ENCODE measurements at regions of chr13 and their contacts with region 1.

Region 1: DNA sequence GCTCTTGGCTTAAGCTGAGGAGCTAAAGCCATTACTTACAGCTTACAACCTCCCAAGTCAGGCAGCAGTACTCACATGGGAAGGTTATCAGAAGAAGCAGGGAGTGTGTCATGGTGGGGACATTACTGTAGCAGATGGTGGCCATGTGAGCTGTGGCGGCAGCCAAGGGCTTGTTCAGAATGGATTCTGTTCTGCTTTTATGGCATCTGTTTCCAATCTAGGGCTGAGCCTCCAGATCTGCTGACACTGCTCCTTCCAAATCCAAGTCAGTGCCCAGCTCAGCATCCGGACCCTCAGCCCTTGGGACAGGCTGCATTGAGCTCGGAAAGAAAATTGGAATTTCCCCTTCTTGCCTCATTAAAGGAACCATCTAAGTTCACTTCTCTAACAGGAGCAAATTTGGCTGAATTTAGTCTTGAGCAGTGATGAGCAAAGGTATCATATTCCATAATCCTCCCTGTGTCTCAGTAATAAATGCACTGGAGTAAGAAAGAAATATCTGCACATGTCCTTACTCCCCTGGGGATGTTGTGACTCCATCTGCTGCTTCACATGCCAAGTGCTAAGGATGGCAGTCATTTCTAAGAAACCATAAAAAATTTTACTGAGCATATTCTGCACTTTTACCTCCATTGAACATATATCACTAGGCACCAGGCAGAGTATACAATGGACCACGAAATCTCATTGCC is 73.9 kb downstream of the KCTD12 start:
- DNase-seq: peak; percentile 58 to 65
- ATAC-seq: peak; percentile 80 to 90 (median 86)
- H3K4me3 ChIP-seq: no peak overlapping the region
- H3K27ac ChIP-seq: peak overlapping the region in 7 of 10 donors; percentile 43 to 76 (median 59)
- H3K4me1 ChIP-seq: peaks cover 9 to 42% (median 24%) of the 10 kb centered on the region in 9 donors
- H3K27me3 ChIP-seq: no peaks in the 10 kb centered on the region
- CTCF ChIP-seq: no peak

Region 2: DNA sequence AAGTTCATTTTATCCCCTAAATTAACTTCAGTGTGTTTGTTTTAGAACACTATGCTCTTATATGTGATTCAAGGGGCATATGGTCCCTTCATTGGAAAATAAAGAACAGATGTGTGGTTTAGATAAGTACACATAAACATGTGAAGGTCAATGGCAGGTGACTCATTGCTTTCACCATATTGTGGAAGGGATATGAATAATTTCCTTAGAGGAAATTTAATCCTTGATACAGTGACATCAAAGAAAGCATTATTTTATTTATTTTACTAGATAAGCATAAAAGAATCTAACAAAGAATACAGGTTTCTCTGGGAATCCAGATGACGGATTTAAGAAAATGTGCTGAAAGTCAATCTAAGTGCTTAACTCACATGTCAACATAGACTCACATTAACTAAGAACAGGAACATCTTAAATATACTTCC is 299.6 kb before region 1 on chr13:
- intact Hi-C with region 1: loop called in 1 of 10 experiments (anchors 10 kb)
- DNase-seq: peak in 1 of 2 donors; percentile 9
- ATAC-seq: peak; percentile 38 to 94 (median 82)
- H3K4me3 ChIP-seq: no peak overlapping the region
- H3K27ac ChIP-seq: peak overlapping the region in 4 of 10 donors; percentile 7 to 52 (median 21)
- H3K4me1 ChIP-seq: peaks cover 0 to 17% (median 0%) of the 10 kb centered on the region in 9 donors
- H3K27me3 ChIP-seq: no peaks in the 10 kb centered on the region
- CTCF ChIP-seq: no peak

Region 3: GRCh38 chr13:76677043-76677442 is 135.3 kb before region 1 on chr13:
- intact Hi-C with region 1: loop called in 1 of 10 experiments (anchors 10 kb)
- DNase-seq: peak; percentile 20 to 75
- ATAC-seq: peak; percentile 77 to 96 (median 94)
- H3K4me3 ChIP-seq: no peak overlapping the region
- H3K27ac ChIP-seq: peak overlapping the region in 4 of 10 donors; percentile 15 to 54 (median 28)
- H3K4me1 ChIP-seq: peaks cover 0 to 6% (median 0%) of the 10 kb centered on the region in 9 donors
- H3K27me3 ChIP-seq: no peaks in the 10 kb centered on the region
- CTCF ChIP-seq: no peak

Region 4: GRCh38 chr13:76687467-76687866 is 124.9 kb before region 1 on chr13:
- intact Hi-C with region 1: no loop called
- DNase-seq: no peak
- ATAC-seq: peak in 1 of 8 donors; percentile 13
- H3K4me3 ChIP-seq: no peak overlapping the region
- H3K27ac ChIP-seq: no peak overlapping the region
- H3K4me1 ChIP-seq: peaks cover 0 to 16% (median 3%) of the 10 kb centered on the region in 9 donors
- H3K27me3 ChIP-seq: no peaks in the 10 kb centered on the region
- CTCF ChIP-seq: no peak

Region 5: DNA sequence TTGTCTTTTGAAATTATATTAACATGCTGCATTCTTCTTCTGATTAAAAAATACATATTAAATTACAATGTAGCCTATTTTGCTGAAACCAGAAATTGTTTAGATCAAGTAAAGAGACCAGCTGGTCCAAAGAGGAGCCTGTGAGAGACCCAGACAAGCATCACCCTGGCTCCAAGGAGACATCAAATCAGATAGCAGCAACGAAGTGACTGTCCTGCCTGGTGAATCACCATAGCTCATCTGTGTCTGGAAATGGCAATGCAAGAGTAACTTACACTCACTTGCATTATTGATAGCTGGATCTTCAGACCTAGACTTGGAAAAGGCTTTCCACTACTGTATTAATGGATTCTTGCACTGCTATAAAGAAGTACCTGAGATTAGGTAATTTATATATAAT is 95.3 kb before region 1 on chr13:
- intact Hi-C with region 1: loop called in 1 of 10 experiments (anchors 5 kb)
- DNase-seq: no peak
- ATAC-seq: no peak
- H3K4me3 ChIP-seq: no peak overlapping the region
- H3K27ac ChIP-seq: no peak overlapping the region
- H3K4me1 ChIP-seq: peaks cover 0 to 24% (median 1%) of the 10 kb centered on the region in 9 donors
- H3K27me3 ChIP-seq: no peaks in the 10 kb centered on the region
- CTCF ChIP-seq: no peak

Measured in heart right ventricle (tissue), 16 donors.